GM18951 (cell line): ENCODE measurements at regions of chr2 and their contacts with region 1.

Region 1: DNA sequence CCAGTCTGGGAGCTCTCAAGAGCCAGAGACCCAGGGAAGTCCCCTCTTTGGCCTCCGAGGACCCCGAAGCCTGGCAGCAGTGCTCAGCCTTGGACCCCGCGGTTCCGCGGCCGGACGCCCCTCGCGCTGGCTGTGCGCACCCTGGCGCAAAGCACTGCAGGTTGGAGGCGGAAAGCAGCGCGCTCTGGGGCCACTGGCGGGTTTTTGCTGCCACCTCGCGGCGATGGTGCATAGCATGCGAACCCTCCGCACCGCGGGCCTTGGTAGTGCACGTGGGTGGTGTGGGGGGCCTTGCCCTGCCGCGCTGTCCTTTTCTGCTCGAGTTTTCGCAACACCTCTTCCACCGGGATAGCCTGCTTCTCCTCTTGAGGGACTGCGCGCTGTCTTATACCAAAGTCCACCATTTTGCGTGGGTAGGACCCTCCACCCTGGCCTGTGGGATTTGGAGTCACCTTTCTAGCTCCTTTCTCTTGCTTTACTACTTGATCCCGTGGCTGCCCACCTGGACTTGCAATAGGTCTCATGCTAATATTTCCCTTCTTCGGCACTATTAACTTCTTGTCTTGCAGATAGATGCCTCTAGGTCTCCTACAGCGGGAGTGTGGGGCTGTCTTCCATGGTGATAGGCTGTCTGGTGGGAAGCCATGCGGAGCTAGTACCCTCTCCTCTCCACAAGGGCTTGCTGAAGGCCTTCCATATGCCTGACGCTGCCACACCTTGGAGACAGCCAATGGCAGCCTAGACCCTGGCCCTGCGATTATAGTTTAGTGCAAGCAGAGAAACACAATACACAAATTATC is 14.3 kb downstream of the SIX3 start:
- POLR2A ChIP-seq: no peak

Region 2: GRCh38 chr2:44044281-44044720 is 911.5 kb before region 1 on chr2:
- in situ Hi-C with region 1: loop called (anchors 25 kb)
- POLR2A ChIP-seq: no peak

Region 3: DNA sequence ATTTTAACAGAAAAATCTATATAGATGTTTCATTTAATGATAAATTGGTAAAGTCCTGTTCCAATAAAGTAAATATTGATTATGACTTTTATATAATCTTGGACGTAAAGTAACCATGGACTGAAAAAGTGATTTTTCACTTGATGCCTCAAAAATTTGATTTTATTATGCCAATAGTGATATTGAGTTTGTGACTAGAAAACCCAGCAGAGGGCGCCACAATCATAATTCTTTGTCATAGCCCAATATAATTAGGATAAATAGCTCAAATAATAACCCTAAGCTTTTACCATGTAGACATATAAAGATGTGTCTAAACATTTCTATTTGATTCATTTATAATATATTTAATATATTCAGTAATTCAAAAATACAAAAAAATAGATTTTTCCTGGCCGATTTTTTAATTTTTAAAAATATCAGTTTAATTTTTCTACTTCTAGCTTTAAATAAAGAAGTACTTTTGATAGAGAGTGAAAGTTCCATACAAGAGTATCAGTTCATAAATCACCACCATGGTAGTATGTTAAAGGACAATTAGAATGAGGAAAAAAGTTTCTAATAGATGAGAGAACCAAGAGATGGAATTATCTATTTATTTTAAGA is 563.4 kb before region 1 on chr2:
- in situ Hi-C with region 1: loop called (anchors 25 kb)
- POLR2A ChIP-seq: no peak

Region 4: GRCh38 chr2:44479122-44479887 is 476.5 kb before region 1 on chr2:
- in situ Hi-C with region 1: loop called (anchors 25 kb)
- POLR2A ChIP-seq: no peak